Endothelial cell of umbilical vein (primary cell): ENCODE measurements at regions of chrX and their contacts with region 1.

Region 1: DNA sequence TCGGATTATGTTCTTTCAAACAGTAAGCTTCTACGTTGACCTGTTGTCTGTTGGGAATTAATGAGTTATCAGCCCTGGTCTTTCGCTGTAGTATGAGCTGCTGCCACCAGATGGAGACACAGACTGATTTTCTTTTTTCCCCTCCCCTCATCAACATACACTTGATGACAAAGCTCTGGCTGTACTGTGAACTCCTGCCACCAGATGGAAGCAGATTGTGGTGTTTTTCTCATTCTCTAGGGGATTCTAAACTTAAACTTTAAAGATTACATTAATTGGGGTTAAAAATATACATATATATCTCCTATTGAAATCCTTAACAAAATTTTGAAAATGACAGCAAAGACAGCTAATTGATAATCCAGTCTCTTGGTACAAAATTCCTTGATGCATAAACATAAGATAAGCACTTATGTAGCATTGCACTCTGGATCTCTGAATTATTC is 44.8 kb downstream of the SMS start:
- DNase-seq: peak; percentile 83
- H3K4me3 ChIP-seq: no peak overlapping the region
- H3K27ac ChIP-seq: no peak overlapping the region
- H3K4me1 ChIP-seq: no peaks in the 10 kb centered on the region
- H3K27me3 ChIP-seq: no peaks in the 10 kb centered on the region
- CTCF ChIP-seq: peak; percentile 61 to 67
- POLR2A ChIP-seq: no peak

Region 2: GRCh38 chrX:21963731-21964405 is 21.5 kb before region 1 on chrX:
- CTCF ChIA-PET with region 1: no interaction called
- POLR2A ChIA-PET with region 1: no interaction called
- dilution Hi-C with region 1: no loop called
- intact Hi-C with region 1: no loop called
- DNase-seq: no peak
- H3K4me3 ChIP-seq: no peak overlapping the region
- H3K27ac ChIP-seq: no peak overlapping the region
- H3K4me1 ChIP-seq: no peaks in the 10 kb centered on the region
- H3K27me3 ChIP-seq: no peaks in the 10 kb centered on the region
- CTCF ChIP-seq: no peak
- POLR2A ChIP-seq: no peak

Region 3: DNA sequence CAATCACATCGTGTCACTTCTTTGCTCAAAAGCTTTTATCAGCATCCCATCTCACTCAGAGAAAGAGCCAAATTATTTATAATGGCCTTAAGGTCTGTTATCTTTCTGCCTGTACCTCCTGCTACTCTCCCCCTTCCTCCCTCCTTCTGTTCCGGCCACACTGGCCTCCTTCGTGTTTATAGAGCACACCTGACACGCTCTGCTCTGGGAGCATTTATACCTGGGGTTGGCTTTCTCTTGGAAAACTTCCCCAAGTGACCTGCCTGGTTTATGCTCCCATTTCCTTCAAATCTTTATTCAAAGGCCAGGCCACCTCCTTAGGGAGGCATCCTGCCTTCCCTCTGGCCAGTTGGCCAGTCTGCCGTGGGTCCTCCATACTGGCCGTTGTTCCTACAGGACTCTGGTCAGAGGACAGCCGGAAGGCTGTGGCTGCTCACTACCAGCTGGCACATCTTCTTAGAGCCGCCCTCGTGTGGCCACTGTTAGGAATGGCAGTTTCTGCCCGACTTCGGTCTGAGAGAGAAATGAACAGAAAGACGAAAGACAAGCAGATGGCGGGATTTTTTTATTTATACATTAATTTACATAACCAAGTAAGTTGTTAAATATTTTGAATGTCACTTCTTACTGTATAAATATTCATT is 207.2 kb after region 1 on chrX:
- CTCF ChIA-PET with region 1: interaction called, 4 read pairs
- POLR2A ChIA-PET with region 1: no interaction called
- dilution Hi-C with region 1: no loop called
- intact Hi-C with region 1: loop called (anchors 1 kb)
- DNase-seq: peak; percentile 46
- H3K4me3 ChIP-seq: no peak overlapping the region
- H3K27ac ChIP-seq: no peak overlapping the region
- H3K4me1 ChIP-seq: no peaks in the 10 kb centered on the region
- H3K27me3 ChIP-seq: no peaks in the 10 kb centered on the region
- CTCF ChIP-seq: peak; percentile 56
- POLR2A ChIP-seq: no peak

Region 4: GRCh38 chrX:22748093-22748999 is 763.0 kb after region 1 on chrX:
- CTCF ChIA-PET with region 1: interaction called, 12 read pairs
- POLR2A ChIA-PET with region 1: no interaction called
- dilution Hi-C with region 1: no loop called
- intact Hi-C with region 1: loop called (anchors 5 kb)
- DNase-seq: peak; percentile 46
- H3K4me3 ChIP-seq: no peak overlapping the region
- H3K27ac ChIP-seq: no peak overlapping the region
- H3K4me1 ChIP-seq: no peaks in the 10 kb centered on the region
- H3K27me3 ChIP-seq: no peaks in the 10 kb centered on the region
- CTCF ChIP-seq: peak; percentile 54 to 62
- POLR2A ChIP-seq: no peak

Region 5: GRCh38 chrX:23317799-23318724 is 1332.7 kb after region 1 on chrX:
- CTCF ChIA-PET with region 1: interaction called, 36 read pairs
- POLR2A ChIA-PET with region 1: no interaction called
- dilution Hi-C with region 1: no loop called
- intact Hi-C with region 1: loop called (anchors 2 kb)
- DNase-seq: peak; percentile 19
- H3K4me3 ChIP-seq: no peak overlapping the region
- H3K27ac ChIP-seq: no peak overlapping the region
- H3K4me1 ChIP-seq: no peaks in the 10 kb centered on the region
- H3K27me3 ChIP-seq: no peaks in the 10 kb centered on the region
- CTCF ChIP-seq: peak; percentile 59 to 86
- POLR2A ChIP-seq: no peak

Region 6: DNA sequence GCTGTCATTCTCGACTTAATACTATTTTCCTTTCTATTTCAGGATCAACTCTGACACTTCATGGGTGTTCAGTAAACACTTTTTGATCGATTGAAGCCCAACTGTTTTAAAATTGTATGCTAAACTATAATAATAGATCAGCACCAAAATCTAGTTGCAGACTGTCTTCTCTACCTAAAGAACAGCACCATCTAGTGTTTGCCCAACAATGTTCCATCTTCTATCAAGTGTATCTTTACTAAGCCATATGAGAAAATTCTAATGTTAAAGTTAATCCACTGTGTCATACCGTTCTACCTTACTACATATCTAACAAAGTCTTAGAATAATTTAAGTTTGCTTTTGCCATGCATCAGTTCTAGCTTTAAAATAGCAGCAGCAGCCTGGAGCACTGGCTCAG is 1568.9 kb after region 1 on chrX:
- CTCF ChIA-PET with region 1: interaction called, 29 read pairs
- POLR2A ChIA-PET with region 1: no interaction called
- dilution Hi-C with region 1: no loop called
- intact Hi-C with region 1: loop called (anchors 1 kb)
- DNase-seq: peak; percentile 25
- H3K4me3 ChIP-seq: no peak overlapping the region
- H3K27ac ChIP-seq: no peak overlapping the region
- H3K4me1 ChIP-seq: no peaks in the 10 kb centered on the region
- H3K27me3 ChIP-seq: no peaks in the 10 kb centered on the region
- CTCF ChIP-seq: peak in 1 of 2 donors; percentile 34
- POLR2A ChIP-seq: no peak

Region 7: DNA sequence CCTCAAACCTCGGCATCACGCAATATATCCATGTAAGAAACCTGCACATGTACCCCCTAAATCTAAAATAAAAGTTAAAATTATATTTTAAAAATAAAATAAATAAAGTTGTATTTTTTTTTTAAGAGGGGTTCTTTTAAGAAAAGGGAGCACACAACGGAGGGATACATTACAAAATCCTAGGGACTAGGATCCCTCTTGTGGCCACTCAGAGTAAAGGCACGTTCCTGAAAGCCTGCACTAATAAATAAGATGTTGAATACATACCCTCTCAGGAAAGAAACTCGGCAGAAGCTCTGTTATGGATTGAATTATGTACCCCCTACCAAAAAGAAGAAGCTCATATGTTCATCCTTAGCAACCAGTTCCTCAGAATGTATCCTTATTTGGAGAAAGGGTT is 1631.0 kb after region 1 on chrX:
- CTCF ChIA-PET with region 1: interaction called, 16 read pairs
- POLR2A ChIA-PET with region 1: no interaction called
- dilution Hi-C with region 1: no loop called
- intact Hi-C with region 1: loop called (anchors 1 kb)
- DNase-seq: peak; percentile 12
- H3K4me3 ChIP-seq: no peak overlapping the region
- H3K27ac ChIP-seq: no peak overlapping the region
- H3K4me1 ChIP-seq: no peaks in the 10 kb centered on the region
- H3K27me3 ChIP-seq: no peaks in the 10 kb centered on the region
- CTCF ChIP-seq: peak; percentile 25 to 39
- POLR2A ChIP-seq: no peak